SK-N-SH (cell line): ENCODE measurements at regions of chr17 and their contacts with region 1.

Region 1: DNA sequence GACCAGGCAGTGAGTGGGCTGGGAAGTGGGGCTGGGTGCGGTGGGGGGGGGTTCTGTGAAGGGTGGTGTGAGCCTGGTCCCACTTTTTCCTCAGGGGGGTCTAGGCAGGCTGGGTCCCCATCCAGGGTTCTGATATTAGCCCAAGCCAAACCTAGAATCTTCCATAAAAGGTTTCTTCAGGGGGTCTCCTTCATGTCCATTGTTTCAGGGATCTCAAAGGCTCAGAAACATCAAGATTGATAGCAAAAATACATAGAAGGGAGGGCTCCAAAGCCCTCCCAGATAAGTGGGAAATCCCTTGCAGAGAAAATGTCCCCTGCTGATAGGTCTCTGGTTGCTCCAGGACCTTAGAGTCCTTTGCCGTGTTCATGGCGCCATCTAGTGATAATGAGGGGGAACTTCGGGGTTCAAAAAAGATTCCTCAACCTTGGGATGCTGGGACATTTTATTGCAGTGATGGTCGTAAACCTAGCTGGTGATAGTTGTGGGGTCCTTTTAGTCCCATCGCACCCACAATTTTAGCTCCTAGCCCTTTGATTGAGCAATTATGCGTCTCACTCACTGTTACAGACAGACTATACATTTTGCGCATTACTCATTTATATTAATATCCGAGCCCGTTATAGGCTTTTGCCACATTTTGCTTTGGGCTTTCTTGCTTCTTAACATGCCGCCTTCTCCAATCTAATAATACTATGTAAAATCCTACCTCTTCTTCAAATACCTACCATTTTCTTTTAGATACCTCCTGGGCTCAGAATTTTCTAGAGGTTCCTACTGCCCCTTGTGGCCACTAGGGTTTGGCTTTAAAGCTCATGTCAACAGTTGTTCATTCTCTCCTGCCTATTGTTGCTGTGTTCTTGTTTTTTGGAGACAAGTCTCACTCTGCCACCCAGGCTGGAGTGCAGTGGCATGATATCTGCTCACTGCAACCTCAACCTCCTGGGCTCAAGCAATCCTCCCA is 35.1 kb downstream of the IGF2BP1 start:
- DNase-seq: peak; percentile 88
- H3K4me3 ChIP-seq: peak overlapping the region in 1 of 2 experiments; percentile 28; a peak in 1 of 4 replicates
- H3K27ac ChIP-seq: no peak overlapping the region
- H3K4me1 ChIP-seq: peaks cover 0 to 6% of the 10 kb centered on the region in 2 experiments; a peak in 1 of 4 replicates
- H3K27me3 ChIP-seq: peaks cover 34% of the 10 kb centered on the region; the same call in 1 of the 2 replicates
- CTCF ChIP-seq: peak; percentile 95
- EP300 ChIP-seq: no peak
- RAD21 ChIP-seq: peak; percentile 98

Region 2: DNA sequence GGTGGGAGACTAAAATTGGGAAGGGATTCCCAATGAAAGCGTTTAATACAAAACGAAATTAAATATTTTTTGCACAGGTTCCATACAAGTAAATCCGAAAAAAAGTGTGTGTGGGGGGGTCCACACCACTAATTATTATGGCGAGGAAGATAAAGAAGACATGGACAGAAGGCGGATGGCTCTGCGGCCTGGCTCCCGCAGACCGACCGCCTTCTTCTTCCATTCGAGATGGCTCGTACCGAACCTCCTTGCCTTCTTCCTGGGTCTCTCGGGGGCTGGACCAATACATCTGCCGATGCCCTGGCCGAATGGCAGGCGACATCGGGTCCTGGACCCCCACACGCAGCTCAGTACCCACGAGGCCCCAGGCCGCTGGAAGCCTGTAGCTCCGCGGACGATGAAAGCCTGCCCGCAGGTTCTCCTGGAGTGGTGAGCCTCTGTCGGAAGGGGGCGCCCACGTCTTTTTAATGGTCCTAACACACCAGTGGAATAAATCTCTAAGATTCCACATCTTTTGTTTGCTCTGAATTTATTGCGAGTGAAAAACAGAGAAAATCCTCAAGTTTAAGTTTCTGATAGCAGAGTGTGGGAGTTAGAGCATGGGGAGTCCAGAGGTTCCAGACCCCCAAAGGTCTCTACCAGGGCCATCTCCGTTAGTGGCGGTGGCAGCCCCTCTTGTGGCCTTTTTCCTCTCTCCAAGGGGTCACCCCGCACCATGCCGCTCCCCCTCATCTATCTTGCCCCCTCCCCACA is 307.8 kb before region 1 on chr17:
- CTCF ChIA-PET with region 1: interaction called, 22 read pairs
- POLR2A ChIA-PET with region 1: no interaction called
- DNase-seq: peak; percentile 83
- H3K4me3 ChIP-seq: peak overlapping the region; percentile 21 to 42; a peak in 3 of 4 replicates
- H3K27ac ChIP-seq: no peak overlapping the region
- H3K4me1 ChIP-seq: no peaks in the 10 kb centered on the region
- H3K27me3 ChIP-seq: peaks cover 100% of the 10 kb centered on the region
- CTCF ChIP-seq: peak; percentile 97
- EP300 ChIP-seq: no peak
- RAD21 ChIP-seq: peak; percentile 82

Region 3: GRCh38 chr17:48825446-48826381 is 206.5 kb before region 1 on chr17:
- CTCF ChIA-PET with region 1: interaction called, 15 read pairs
- POLR2A ChIA-PET with region 1: no interaction called
- DNase-seq: no peak
- H3K4me3 ChIP-seq: no peak overlapping the region
- H3K27ac ChIP-seq: peak overlapping the region in 1 of 2 experiments; percentile 1; a peak in 1 of 4 replicates
- H3K4me1 ChIP-seq: peaks cover 0 to 7% of the 10 kb centered on the region in 2 experiments; a peak in 2 of 4 replicates
- H3K27me3 ChIP-seq: no peaks in the 10 kb centered on the region; the same call in 1 of the 2 replicates
- CTCF ChIP-seq: no peak
- EP300 ChIP-seq: no peak
- RAD21 ChIP-seq: no peak

Region 4: DNA sequence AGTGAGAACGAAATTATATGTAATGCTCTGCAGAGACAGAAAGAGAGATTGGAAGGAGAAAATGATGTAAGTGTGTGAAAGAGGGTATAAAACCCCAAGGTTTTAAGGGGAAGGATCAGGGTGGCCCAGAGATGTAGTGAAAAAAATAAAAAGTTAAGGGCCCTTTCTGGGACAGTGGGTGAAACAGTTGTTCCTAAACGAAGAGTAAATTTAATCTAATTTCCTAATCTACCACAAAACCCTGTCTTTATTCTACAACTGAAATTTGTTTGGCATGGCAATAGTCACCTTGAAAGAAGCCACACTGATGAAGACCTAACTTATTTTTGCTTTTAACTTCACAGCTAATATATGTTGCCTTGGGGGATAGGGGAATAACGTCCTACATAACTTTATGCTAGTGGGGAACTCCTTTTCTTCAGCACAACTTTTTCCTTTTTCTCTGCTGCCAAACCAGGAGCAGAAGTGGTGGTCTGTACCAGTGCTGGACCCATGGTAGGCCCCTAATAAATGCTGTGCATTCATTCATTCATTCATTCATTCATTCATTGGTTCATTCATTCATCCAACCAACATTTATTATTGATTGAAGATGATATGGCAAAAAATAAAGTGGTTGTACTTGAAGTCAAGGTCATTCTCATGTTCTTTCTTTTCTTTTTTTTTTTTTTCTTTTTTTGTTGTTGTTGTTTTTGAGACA is 176.0 kb before region 1 on chr17:
- CTCF ChIA-PET with region 1: no interaction called
- POLR2A ChIA-PET with region 1: no interaction called
- DNase-seq: no peak
- H3K4me3 ChIP-seq: no peak overlapping the region
- H3K27ac ChIP-seq: no peak overlapping the region
- H3K4me1 ChIP-seq: no peaks in the 10 kb centered on the region
- H3K27me3 ChIP-seq: no peaks in the 10 kb centered on the region
- CTCF ChIP-seq: no peak
- EP300 ChIP-seq: no peak
- RAD21 ChIP-seq: no peak

Region 5: DNA sequence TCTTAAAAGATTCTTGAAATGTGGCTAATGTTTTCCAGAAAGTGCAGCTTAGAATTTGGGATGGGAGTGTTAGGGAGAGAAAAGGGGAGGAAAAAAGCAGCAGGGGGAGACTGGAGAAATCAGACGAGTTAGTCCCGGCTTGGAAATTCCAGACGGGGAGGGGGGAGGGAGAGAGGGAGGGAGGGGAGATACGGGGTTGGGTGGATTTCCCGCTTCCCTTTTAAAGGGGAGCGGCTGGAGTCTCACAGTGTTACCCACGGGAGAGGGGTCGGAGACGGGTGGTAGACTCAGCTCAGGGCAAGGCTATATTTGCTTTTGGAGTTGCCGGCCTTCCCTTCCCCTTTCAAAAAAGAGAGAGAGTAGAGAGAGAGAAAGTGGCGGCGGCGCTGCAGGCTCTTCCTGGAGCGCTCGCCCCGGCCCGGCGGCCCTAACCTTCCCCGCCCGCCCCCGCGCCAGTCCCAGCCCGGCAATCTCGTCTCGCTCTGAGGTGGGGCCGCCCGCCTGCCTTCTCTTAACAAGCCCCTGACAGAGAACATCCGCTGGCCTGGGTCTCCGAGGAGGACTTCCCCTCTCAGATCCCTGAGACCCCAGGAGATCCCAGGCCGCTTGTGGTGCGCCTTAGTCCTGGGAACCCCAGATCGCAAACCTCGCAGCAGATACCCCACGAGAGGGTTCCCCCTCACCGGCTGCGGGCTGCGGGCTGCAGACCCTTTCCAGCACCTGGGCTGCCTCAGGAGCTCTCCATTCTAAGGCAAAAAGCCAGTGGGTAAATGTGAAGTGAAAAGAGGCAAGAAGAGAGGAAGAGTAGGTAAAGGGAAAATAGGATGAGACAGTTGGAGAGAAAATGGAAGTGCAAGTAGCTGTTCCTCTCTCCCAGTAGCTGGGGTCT is 28.4 kb before region 1 on chr17:
- CTCF ChIA-PET with region 1: interaction called, 88 read pairs
- POLR2A ChIA-PET with region 1: no interaction called
- DNase-seq: no peak
- H3K4me3 ChIP-seq: no peak overlapping the region
- H3K27ac ChIP-seq: no peak overlapping the region
- H3K4me1 ChIP-seq: no peaks in the 10 kb centered on the region
- H3K27me3 ChIP-seq: peaks cover 99% of the 10 kb centered on the region
- CTCF ChIP-seq: no peak
- EP300 ChIP-seq: no peak
- RAD21 ChIP-seq: no peak

Region 6: DNA sequence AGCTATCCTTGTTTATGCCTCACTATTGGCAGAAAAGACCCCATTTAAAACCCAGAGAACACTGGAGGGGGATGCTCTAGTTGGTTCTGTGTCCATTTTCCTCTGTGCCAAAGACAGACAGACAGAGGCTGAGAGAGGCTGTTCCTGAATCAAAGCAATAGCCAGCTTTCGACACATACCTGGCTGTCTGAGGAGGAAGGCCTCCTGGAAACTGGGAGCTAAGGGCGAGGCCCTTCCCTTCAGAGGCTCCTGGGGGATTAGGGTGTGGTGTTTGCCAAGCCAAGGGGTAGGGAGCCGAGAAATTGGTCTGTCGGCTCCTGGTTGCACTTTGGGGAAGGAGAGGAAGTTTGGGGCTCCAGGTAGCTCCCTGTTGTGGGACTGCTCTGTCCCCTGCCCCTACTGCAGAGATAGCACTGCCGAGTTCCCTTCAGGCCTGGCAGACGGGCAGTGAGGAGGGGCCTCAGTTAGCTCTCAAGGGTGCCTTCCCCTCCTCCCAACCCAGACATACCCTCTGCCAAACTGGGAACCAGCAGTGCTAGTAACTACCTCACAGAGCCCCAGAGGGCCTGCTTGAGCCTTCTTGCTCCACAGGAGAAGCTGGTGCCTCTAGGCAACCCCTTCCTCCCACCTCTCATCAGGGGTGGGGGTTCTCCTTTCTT is 21.1 kb after region 1 on chr17:
- CTCF ChIA-PET with region 1: interaction called, 57 read pairs
- POLR2A ChIA-PET with region 1: no interaction called
- DNase-seq: no peak
- H3K4me3 ChIP-seq: no peak overlapping the region
- H3K27ac ChIP-seq: no peak overlapping the region
- H3K4me1 ChIP-seq: no peaks in the 10 kb centered on the region
- H3K27me3 ChIP-seq: peaks cover 88% of the 10 kb centered on the region
- CTCF ChIP-seq: no peak
- EP300 ChIP-seq: no peak
- RAD21 ChIP-seq: no peak

Region 7: DNA sequence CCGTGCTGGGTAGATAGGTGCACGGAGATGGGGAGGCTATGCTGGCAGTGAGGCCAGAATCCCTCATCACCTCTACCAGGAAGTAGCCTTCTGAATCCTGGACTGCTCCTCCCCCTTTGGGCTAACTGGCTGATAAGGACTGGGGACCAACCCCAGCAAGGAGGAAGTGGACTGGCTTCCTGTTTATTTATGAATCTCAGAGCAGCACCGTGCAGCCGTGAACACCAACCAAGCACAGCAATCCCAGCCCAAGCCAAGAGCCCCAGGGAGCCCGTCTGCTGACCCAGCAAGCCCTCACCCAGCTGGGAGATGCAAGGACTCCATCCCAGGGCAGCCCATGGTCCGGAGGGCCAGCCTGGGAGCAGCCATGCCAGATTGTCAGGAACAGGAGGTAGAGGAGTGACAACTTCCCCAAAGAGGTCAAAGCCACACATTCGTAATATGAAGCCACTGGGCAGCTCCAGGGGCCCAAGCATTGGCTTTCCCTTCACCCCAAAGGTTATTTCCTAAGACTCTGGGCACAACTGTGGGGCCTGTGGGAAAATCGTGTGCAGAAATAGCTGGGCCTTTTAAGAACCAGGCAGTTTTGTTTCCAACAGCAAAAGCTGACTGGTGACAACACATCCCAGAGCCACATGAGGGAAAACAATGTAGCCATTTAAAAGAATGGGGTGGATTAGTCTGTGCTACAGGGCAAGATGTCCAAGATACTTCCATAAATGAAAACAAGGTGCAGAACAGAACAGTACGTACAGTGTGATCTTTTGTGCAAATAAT is 358.5 kb after region 1 on chr17:
- CTCF ChIA-PET with region 1: no interaction called
- POLR2A ChIA-PET with region 1: no interaction called
- DNase-seq: no peak
- H3K4me3 ChIP-seq: no peak overlapping the region
- H3K27ac ChIP-seq: no peak overlapping the region
- H3K4me1 ChIP-seq: no peaks in the 10 kb centered on the region; a peak in 1 of 4 replicates
- H3K27me3 ChIP-seq: no peaks in the 10 kb centered on the region
- CTCF ChIP-seq: no peak
- EP300 ChIP-seq: no peak
- RAD21 ChIP-seq: no peak